Natural killer cell (primary cell): ENCODE measurements at regions of chr6 and their contacts with region 1.

Region 1: GRCh38 chr6:722077-722524 is 29.2 kb upstream of the EXOC2 start:
- DNase-seq: peak; percentile 42 to 85
- ATAC-seq: peak; percentile 76 to 86 (median 85)
- H3K4me3 ChIP-seq: no peak overlapping the region
- H3K4me3 Mint-ChIP-seq: no peak overlapping the region
- H3K27ac ChIP-seq: no peak overlapping the region
- H3K27ac Mint-ChIP-seq: no peak overlapping the region
- H3K4me1 ChIP-seq: peaks cover 8% of the 10 kb centered on the region
- H3K4me1 Mint-ChIP-seq: peaks cover 11% of the 10 kb centered on the region in 2 donors
- H3K27me3 ChIP-seq: peaks cover 4% of the 10 kb centered on the region
- H3K27me3 Mint-ChIP-seq: peaks cover 22 to 41% of the 10 kb centered on the region in 2 donors
- CTCF ChIP-seq: peak; percentile 95

Region 2: GRCh38 chr6:1436334-1437306 is 714.5 kb after region 1 on chr6:
- intact Hi-C with region 1: loop called (anchors 5 kb)
- DNase-seq: peak in 1 of 2 donors; percentile 75
- ATAC-seq: peak; percentile 75 to 85 (median 79)
- H3K4me3 ChIP-seq: no peak overlapping the region
- H3K4me3 Mint-ChIP-seq: no peak overlapping the region
- H3K27ac ChIP-seq: no peak overlapping the region
- H3K27ac Mint-ChIP-seq: no peak overlapping the region
- H3K4me1 ChIP-seq: no peaks in the 10 kb centered on the region
- H3K4me1 Mint-ChIP-seq: peaks cover 5 to 7% of the 10 kb centered on the region in 2 donors
- H3K27me3 ChIP-seq: no peaks in the 10 kb centered on the region
- H3K27me3 Mint-ChIP-seq: peaks cover 30 to 43% of the 10 kb centered on the region in 2 donors
- CTCF ChIP-seq: peak; percentile 69

Region 3: GRCh38 chr6:1590580-1590979 is 868.5 kb after region 1 on chr6:
- intact Hi-C with region 1: no loop called
- DNase-seq: no peak
- ATAC-seq: no peak
- H3K4me3 ChIP-seq: no peak overlapping the region
- H3K4me3 Mint-ChIP-seq: no peak overlapping the region
- H3K27ac ChIP-seq: no peak overlapping the region
- H3K27ac Mint-ChIP-seq: no peak overlapping the region
- H3K4me1 ChIP-seq: peaks cover 2% of the 10 kb centered on the region
- H3K4me1 Mint-ChIP-seq: no peaks in the 10 kb centered on the region
- H3K27me3 ChIP-seq: no peaks in the 10 kb centered on the region
- H3K27me3 Mint-ChIP-seq: peaks cover 22 to 34% of the 10 kb centered on the region in 2 donors
- CTCF ChIP-seq: no peak